ENCODE measurements at regions of chr1 and their contacts with region 1.

Region 1: GRCh38 chr1:33094971-33095604 is 14.1 kb downstream of the AZIN2 start:
- DNase-seq: peak; percentile 48
- H3K4me3 ChIP-seq: no peak overlapping the region
- H3K27ac ChIP-seq: no peak overlapping the region
- H3K4me1 ChIP-seq: peaks cover 31% of the 10 kb centered on the region
- H3K27me3 ChIP-seq: no peaks in the 10 kb centered on the region
- CTCF ChIP-seq: peak; percentile 98 to 99

Region 2: GRCh38 chr1:32886004-32886827 is 208.9 kb before region 1 on chr1 and contains the start of gene HPCA:
- CTCF ChIA-PET with region 1: no interaction called
- dilution Hi-C with region 1: no loop called
- in situ Hi-C with region 1: no loop called
- intact Hi-C with region 1: no loop called
- DNase-seq: peak; percentile 41
- H3K4me3 ChIP-seq: no peak within 1 kb of the TSS
- H3K27ac ChIP-seq: no peak within 1 kb of the TSS
- H3K4me1 ChIP-seq: no peaks in the 10 kb centered on the region
- H3K27me3 ChIP-seq: no peaks in the 10 kb centered on the region
- CTCF ChIP-seq: peak; percentile 70 to 79
- total RNA-seq, gene HPCA: not detected

Region 3: DNA sequence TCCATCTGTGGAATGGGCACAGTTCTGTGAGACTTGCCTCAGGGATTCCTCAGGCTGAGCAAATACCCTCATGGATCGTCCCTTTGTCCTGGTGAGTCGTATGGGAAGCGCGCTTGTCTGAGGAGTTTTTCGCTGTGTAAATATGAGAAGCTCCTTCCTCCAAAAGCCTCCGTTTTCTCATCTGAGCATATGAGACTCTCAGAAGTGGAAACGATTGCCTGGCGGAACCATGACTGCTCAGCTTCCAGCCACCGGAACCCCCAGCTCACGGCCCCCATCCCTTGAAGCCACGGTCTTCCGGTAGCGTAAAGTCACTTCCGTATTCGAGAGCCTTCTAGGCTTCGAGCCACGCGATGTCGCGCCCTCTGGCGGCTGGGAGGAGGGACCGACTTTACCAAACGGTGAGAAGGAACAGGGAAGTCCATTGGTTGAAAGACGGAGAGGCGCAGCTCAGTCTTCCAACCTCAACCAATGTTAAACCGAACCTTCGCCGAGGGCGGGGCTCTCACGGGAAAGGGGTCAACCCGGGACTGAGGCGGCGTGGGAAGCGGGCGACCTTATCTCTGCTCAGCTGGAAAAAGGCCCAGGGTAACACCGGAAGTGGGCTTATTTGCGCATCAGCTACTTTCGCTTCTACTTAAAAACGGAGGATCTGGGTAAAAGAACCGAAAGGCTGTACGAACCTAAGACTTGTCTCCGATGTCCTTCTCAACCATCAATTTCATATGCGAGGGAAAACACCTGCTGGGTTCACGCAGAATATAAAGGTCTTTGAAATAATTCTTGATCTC is 32.1 kb after region 1 on chr1:
- CTCF ChIA-PET with region 1: interaction called, 11 read pairs
- dilution Hi-C with region 1: no loop called
- in situ Hi-C with region 1: no loop called
- intact Hi-C with region 1: loop called (anchors 1 kb)
- DNase-seq: peak; percentile 99
- H3K4me3 ChIP-seq: peak overlapping the region; percentile 90 to 100 (median 96)
- H3K27ac ChIP-seq: peak overlapping the region; percentile 79
- H3K4me1 ChIP-seq: peaks cover 20% of the 10 kb centered on the region
- H3K27me3 ChIP-seq: no peaks in the 10 kb centered on the region
- CTCF ChIP-seq: peak; percentile 95 to 99

Region 4: GRCh38 chr1:33367485-33368405 is 272.7 kb after region 1 on chr1:
- CTCF ChIA-PET with region 1: no interaction called
- dilution Hi-C with region 1: no loop called
- in situ Hi-C with region 1: no loop called
- intact Hi-C with region 1: loop called (anchors 2 kb)
- DNase-seq: peak; percentile 62
- H3K4me3 ChIP-seq: no peak overlapping the region
- H3K27ac ChIP-seq: no peak overlapping the region
- H3K4me1 ChIP-seq: peaks cover 34% of the 10 kb centered on the region
- H3K27me3 ChIP-seq: no peaks in the 10 kb centered on the region
- CTCF ChIP-seq: peak; percentile 94 to 99

Region 5: GRCh38 chr1:33472349-33472980 is 377.4 kb after region 1 on chr1 and contains the start of gene ZSCAN20:
- CTCF ChIA-PET with region 1: no interaction called
- dilution Hi-C with region 1: no loop called
- in situ Hi-C with region 1: no loop called
- intact Hi-C with region 1: loop called (anchors 5 kb)
- DNase-seq: peak; percentile 97
- H3K4me3 ChIP-seq: peak within 1 kb of the TSS; percentile 72 to 84 (median 79)
- H3K27ac ChIP-seq: peak within 1 kb of the TSS; percentile 44
- H3K4me1 ChIP-seq: peaks cover 19% of the 10 kb centered on the region
- H3K27me3 ChIP-seq: no peaks in the 10 kb centered on the region
- CTCF ChIP-seq: no peak
- total RNA-seq, gene ZSCAN20: 5.3 to 8.0 TPM

Measured in mammary epithelial cell (primary cell).